Activated CD4-positive, alpha-beta memory T cell treated with anti-CD3 and anti-CD28 coated beads for 36 hours (primary cell): ENCODE measurements at regions of chr13 and their contacts with region 1.

Region 1: DNA sequence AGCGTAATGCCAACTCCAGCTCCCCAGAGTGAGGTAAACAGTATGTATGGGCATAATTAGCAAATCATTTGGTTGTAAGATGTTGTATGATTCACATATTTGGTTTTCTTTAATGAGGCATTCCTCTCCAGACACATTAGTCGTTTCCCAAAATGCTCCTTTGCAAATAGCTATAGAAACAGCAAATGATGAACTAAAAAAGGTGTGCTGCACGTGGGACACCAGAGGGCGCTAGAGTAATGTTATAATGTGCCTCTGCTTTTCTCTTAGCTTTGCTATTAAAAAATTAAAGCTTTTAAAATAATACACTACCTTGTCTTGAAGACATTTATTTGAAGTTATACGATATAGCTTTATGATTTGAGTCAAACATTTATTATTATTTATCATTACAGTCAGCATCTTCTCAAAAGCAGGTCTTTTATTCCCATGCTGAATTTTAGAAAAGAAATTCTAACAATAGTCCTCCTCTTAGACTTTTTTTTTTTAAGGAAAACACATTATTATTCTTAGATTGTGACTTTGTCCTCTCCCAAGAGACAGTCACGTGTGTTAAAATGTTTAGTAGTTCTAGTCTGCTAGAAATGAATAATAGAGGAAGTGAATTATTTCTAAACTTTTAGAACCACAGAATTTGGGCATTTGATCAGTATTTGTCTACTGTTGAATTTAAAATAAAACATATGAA is 121.6 kb upstream of the FRY start:
- DNase-seq: peak; percentile 52
- H3K4me3 Mint-ChIP-seq: no peak overlapping the region
- H3K27ac Mint-ChIP-seq: no peak overlapping the region
- H3K4me1 Mint-ChIP-seq: peaks cover 9% of the 10 kb centered on the region
- H3K27me3 Mint-ChIP-seq: no peaks in the 10 kb centered on the region

Region 2: GRCh38 chr13:31807090-31807541 is 102.9 kb before region 1 on chr13:
- CTCF ChIA-PET with region 1: no interaction called
- POLR2A ChIA-PET with region 1: no interaction called
- intact Hi-C with region 1: no loop called
- DNase-seq: peak; percentile 51
- H3K4me3 Mint-ChIP-seq: no peak overlapping the region
- H3K27ac Mint-ChIP-seq: peak overlapping the region; percentile 4
- H3K4me1 Mint-ChIP-seq: peaks cover 26% of the 10 kb centered on the region
- H3K27me3 Mint-ChIP-seq: no peaks in the 10 kb centered on the region

Region 3: DNA sequence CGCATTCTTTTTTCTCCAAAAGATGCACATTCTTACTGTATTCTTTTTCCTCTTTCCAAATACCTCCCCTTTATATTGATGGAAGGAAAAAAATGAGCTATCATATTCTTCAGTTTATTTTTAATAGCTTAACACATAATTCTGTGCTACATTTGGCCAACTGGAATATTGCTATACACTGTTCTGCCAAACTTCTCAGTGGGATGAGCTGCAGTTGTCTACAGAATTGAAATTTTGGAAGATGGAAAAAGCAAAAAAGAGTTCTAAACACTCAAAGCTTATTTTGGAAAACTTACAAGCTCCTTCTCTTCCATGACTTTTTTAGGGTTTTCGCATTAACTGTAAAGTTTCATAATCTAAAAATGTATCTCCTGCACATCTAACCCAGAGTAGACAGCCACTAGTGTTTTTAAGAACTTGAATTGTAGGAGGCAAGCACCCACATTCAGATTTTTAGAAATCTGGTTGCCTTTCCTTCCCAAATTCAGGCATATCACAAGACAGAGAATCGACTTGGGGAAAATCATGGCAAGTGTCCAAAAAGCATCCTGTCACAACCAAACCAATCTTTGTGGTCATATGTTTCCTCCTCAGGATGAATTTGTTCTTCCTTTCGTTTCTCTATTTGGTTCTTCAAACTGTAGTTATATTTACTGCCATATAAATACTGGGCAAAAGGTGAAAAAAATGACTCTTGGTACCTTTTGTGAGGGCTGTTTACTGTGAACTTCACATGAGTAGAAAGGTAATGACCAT is 10.1 kb after region 1 on chr13:
- CTCF ChIA-PET with region 1: interaction called, 23 read pairs
- POLR2A ChIA-PET with region 1: no interaction called
- intact Hi-C with region 1: no loop called
- DNase-seq: no peak
- H3K4me3 Mint-ChIP-seq: no peak overlapping the region
- H3K27ac Mint-ChIP-seq: no peak overlapping the region
- H3K4me1 Mint-ChIP-seq: peaks cover 14% of the 10 kb centered on the region
- H3K27me3 Mint-ChIP-seq: no peaks in the 10 kb centered on the region

Region 4: GRCh38 chr13:31930901-31931522 is 21.0 kb after region 1 on chr13:
- CTCF ChIA-PET with region 1: interaction called, 30 read pairs
- POLR2A ChIA-PET with region 1: no interaction called
- intact Hi-C with region 1: no loop called
- DNase-seq: peak; percentile 50
- H3K4me3 Mint-ChIP-seq: no peak overlapping the region
- H3K27ac Mint-ChIP-seq: no peak overlapping the region
- H3K4me1 Mint-ChIP-seq: peaks cover 12% of the 10 kb centered on the region
- H3K27me3 Mint-ChIP-seq: no peaks in the 10 kb centered on the region

Region 5: GRCh38 chr13:32031025-32031814 is 121.2 kb after region 1 on chr13 and contains the start of gene FRY:
- CTCF ChIA-PET with region 1: interaction called, 11 read pairs
- POLR2A ChIA-PET with region 1: no interaction called
- intact Hi-C with region 1: loop called (anchors 2 kb)
- DNase-seq: peak; percentile 69
- H3K4me3 Mint-ChIP-seq: peak within 1 kb of the TSS; percentile 88
- H3K27ac Mint-ChIP-seq: peak within 1 kb of the TSS; percentile 53
- H3K4me1 Mint-ChIP-seq: peaks cover 25% of the 10 kb centered on the region
- H3K27me3 Mint-ChIP-seq: peaks cover 4% of the 10 kb centered on the region
- total RNA-seq, gene FRY: 4.4 to 5.3 TPM

Region 6: DNA sequence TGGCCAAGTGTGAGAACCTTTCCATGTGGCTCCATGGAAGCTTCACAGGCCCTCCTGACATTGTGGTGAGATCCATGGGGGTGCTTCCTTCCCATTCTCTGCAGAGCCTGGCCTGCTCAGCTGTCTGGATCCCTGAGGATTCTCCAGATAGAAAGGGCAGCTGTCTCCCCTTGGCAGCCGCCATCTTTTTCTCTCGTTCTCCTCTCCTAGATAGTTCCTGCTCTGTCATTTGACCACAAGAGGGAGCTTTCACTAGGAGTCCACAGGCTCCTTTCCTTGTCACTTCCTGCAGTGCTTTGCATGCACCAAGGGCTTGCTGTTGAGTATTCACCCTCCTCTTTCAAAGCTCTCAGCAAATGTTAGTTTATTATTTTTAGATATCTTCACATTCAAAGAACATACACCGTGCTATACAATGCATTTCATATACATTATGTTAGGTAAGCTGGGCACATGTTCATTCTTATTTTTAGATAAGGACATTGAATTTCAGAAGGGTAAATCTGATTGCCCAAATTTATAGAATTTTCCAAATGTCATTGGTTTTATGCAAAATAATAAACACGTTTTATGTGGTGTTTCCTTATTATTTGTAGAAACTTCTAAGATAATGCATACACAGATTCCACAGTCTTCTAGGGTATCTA is 254.7 kb after region 1 on chr13:
- CTCF ChIA-PET with region 1: interaction called, 19 read pairs
- POLR2A ChIA-PET with region 1: no interaction called
- intact Hi-C with region 1: no loop called
- DNase-seq: peak; percentile 17
- H3K4me3 Mint-ChIP-seq: no peak overlapping the region
- H3K27ac Mint-ChIP-seq: no peak overlapping the region
- H3K4me1 Mint-ChIP-seq: no peaks in the 10 kb centered on the region
- H3K27me3 Mint-ChIP-seq: no peaks in the 10 kb centered on the region

Region 7: GRCh38 chr13:32310134-32310706 is 400.2 kb after region 1 on chr13:
- CTCF ChIA-PET with region 1: interaction called, 7 read pairs
- POLR2A ChIA-PET with region 1: interaction called, 3 read pairs
- intact Hi-C with region 1: loop called (anchors 1 kb)
- DNase-seq: peak; percentile 17
- H3K4me3 Mint-ChIP-seq: no peak overlapping the region
- H3K27ac Mint-ChIP-seq: no peak overlapping the region
- H3K4me1 Mint-ChIP-seq: peaks cover 15% of the 10 kb centered on the region
- H3K27me3 Mint-ChIP-seq: no peaks in the 10 kb centered on the region

Region 8: DNA sequence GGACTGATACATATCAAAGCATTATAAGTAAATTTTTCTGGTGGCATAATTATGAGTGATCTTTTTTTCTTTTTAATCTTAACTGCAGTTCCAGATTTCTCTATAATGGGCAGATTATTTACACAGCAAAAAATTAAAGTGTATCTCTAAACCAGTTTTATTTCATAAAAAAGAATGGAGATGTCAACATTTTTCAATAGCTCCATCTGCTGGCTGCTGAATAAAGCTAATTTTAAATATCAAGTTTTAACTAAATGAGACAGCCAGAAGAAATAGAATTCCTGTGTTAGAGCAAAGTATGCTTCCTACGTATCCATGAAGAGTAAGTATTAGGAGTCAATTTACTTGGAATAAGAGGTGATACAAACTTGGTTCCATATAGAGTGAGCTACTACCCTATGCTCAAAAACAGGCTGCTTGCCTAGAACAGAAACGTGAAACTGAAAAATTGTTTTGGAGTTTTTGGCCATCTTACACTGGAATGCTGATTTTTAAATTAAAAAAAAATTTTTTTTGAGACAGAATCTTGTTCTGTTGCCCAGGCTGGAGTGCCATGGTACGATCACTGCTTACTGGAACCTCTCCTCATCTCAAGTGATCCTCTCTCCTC is 671.3 kb after region 1 on chr13:
- CTCF ChIA-PET with region 1: interaction called, 17 read pairs
- POLR2A ChIA-PET with region 1: no interaction called
- intact Hi-C with region 1: loop called (anchors 1 kb)
- DNase-seq: no peak
- H3K4me3 Mint-ChIP-seq: no peak overlapping the region
- H3K27ac Mint-ChIP-seq: no peak overlapping the region
- H3K4me1 Mint-ChIP-seq: peaks cover 8% of the 10 kb centered on the region
- H3K27me3 Mint-ChIP-seq: no peaks in the 10 kb centered on the region